Ovary (tissue), 10 donors: ENCODE measurements at regions of chr16 and their contacts with region 1.

Region 1: DNA sequence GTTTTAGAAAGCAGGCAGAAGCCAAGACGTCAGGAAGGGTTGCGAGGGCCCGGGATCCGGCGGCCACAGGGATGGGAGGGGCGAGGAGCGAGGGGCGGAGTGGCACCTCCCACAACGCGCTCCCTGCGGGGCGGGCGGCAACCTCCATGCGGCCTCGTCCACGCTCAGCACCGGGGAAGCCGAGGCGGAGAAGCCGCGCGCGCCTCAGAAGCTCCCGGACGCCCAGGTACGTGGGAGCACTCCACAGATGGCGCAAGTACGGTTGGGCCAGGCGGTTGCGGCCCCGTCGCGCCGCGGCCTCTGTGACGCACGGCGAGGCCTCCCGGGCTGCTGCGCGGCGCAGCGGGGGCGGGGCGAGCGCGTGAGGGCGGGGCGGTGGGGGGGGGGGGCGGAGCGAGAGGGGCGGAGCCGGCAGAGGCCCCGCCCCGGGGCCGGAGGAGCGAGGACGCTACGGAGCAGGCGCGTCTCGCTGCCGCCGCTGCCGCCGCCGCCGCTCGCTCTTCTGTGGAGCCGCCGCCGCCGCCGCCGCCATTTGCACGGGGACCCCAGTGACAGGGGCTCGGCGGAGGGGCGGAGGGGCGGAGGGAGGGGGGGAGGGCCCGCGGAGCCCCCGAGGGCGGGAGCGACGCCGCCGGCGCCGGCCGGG is at the start of gene TENT4B:
- DNase-seq: peak; percentile 84 to 91 (median 89)
- H3K4me3 ChIP-seq: peak within 1 kb of the TSS; percentile 80
- H3K27ac ChIP-seq: peak within 1 kb of the TSS; percentile 76 to 99
- H3K4me1 ChIP-seq: peaks cover 6% of the 10 kb centered on the region
- H3K27me3 ChIP-seq: no peaks in the 10 kb centered on the region
- CTCF ChIP-seq: no peak
- EP300 ChIP-seq: no peak
- POLR2A ChIP-seq: peak; percentile 90
- total RNA-seq, gene TENT4B: 9.7 to 17.7 (median 12.3) TPM

Region 2: GRCh38 chr16:50024684-50025536 is 128.0 kb before region 1 on chr16 and contains the start of gene CNEP1R1:
- intact Hi-C with region 1: loop called in 1 of 4 experiments (anchors 10 kb)
- DNase-seq: peak; percentile 91 to 96 (median 94)
- H3K4me3 ChIP-seq: peak within 1 kb of the TSS; percentile 98
- H3K27ac ChIP-seq: peak within 1 kb of the TSS in 1 of 2 donors; percentile 73
- H3K4me1 ChIP-seq: peaks cover 4% of the 10 kb centered on the region
- H3K27me3 ChIP-seq: no peaks in the 10 kb centered on the region
- CTCF ChIP-seq: peak; percentile 99 to 100 (median 100)
- EP300 ChIP-seq: no peak
- POLR2A ChIP-seq: no peak
- total RNA-seq, gene CNEP1R1: 9.4 to 19.0 (median 13.3) TPM

Region 3: DNA sequence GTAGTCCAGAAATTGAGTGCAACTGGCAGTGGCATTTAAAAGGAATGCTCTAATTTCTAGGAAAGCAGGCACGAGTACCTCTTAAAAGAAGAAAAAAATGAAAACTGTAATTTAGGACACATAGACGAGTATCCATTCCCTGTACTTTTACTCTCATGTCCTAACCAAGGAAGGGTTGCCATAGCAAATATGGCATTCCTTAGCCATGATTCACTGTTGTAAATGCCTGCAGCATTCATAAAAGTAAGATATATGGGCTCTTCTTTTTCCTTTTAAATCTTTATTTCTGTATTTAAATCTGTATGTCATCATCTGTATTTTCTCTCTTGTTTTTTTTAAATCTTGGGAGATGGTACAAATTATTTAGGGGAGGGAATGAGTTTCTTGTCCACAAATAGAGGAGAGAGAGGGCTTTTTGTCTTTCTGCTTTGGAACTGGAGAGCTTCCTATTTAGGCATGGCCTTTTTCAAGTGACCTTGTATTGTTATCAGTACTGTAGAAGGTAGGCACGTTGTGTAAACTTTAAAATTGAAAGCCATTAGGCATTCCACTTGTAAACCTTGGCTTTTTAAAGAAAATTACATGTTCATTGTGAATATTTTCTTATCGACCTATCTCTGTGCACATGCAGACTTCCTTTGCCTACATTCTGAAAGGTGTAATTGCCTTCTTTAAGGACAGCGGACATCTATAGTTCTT is 50.1 kb after region 1 on chr16:
- intact Hi-C with region 1: loop called in 1 of 4 experiments (anchors 10 kb)
- DNase-seq: peak in 1 of 5 donors; percentile 40
- H3K4me3 ChIP-seq: no peak overlapping the region
- H3K27ac ChIP-seq: peak overlapping the region in 1 of 2 donors; percentile 62
- H3K4me1 ChIP-seq: peaks cover 20% of the 10 kb centered on the region
- H3K27me3 ChIP-seq: no peaks in the 10 kb centered on the region
- CTCF ChIP-seq: no peak
- EP300 ChIP-seq: no peak
- POLR2A ChIP-seq: no peak